Prostate gland (tissue), 2 donors: ENCODE measurements at regions of chr7 and their contacts with region 1.

Region 1: GRCh38 chr7:76291343-76292212 is 10.9 kb upstream of the HSPB1 start:
- DNase-seq: peak; percentile 92
- H3K4me3 ChIP-seq: peak overlapping the region in 1 of 2 donors; percentile 17
- H3K27ac ChIP-seq: peak overlapping the region; percentile 98
- H3K4me1 ChIP-seq: peaks cover 24% of the 10 kb centered on the region
- H3K27me3 ChIP-seq: no peaks in the 10 kb centered on the region
- CTCF ChIP-seq: peak; percentile 98 to 100 (median 99)
- POLR2A ChIP-seq: peak; percentile 6

Region 2: GRCh38 chr7:76314042-76314721 is 22.6 kb after region 1 on chr7:
- intact Hi-C with region 1: loop called (anchors 1 kb)
- DNase-seq: peak; percentile 95
- H3K4me3 ChIP-seq: no peak overlapping the region
- H3K27ac ChIP-seq: peak overlapping the region in 1 of 2 donors; percentile 35
- H3K4me1 ChIP-seq: peaks cover 5% of the 10 kb centered on the region
- H3K27me3 ChIP-seq: no peaks in the 10 kb centered on the region
- CTCF ChIP-seq: peak; percentile 100
- POLR2A ChIP-seq: no peak

Region 3: GRCh38 chr7:76359111-76359978 is 67.8 kb after region 1 on chr7:
- intact Hi-C with region 1: loop called (anchors 5 kb)
- DNase-seq: peak; percentile 97
- H3K4me3 ChIP-seq: peak overlapping the region; percentile 96 to 98
- H3K27ac ChIP-seq: peak overlapping the region; percentile 99
- H3K4me1 ChIP-seq: peaks cover 7% of the 10 kb centered on the region
- H3K27me3 ChIP-seq: no peaks in the 10 kb centered on the region
- CTCF ChIP-seq: peak; percentile 59 to 95 (median 84)
- POLR2A ChIP-seq: peak; percentile 71